MCF 10A (cell line): ENCODE measurements at regions of chr2 and their contacts with region 1.

Region 1: DNA sequence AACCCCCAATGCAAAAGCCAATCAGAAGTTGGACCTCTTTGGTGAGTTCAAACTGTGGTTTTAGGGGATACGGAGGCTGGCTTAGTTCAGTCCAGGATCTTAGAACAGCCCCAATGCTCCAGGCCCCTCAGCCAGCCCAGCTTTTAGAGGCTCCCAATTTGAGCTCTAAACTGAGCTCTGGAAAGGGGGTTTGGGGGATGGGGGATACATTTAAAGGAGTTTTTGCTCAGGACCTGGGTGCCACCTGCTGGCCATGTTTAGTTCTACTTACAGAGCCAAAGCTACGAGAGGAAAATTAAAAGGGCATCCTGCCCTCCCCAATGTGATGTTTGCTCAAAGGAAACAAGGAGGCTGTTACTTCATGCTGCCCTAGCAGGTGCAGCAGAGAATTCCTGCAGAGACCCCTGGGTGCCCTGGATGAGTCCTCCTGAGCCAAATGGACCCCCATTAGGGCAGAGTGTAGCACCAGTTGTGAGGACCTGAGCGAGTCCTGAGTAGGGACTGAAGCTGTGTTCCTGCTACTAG is 15.9 kb upstream of the TMEM214 start:
- DNase-seq: peak; percentile 68
- H3K4me3 Mint-ChIP-seq: no peak overlapping the region
- H3K27ac Mint-ChIP-seq: no peak overlapping the region
- H3K4me1 Mint-ChIP-seq: peaks cover 20% of the 10 kb centered on the region
- H3K27me3 Mint-ChIP-seq: no peaks in the 10 kb centered on the region
- CTCF ChIP-seq: peak; percentile 77

Region 2: DNA sequence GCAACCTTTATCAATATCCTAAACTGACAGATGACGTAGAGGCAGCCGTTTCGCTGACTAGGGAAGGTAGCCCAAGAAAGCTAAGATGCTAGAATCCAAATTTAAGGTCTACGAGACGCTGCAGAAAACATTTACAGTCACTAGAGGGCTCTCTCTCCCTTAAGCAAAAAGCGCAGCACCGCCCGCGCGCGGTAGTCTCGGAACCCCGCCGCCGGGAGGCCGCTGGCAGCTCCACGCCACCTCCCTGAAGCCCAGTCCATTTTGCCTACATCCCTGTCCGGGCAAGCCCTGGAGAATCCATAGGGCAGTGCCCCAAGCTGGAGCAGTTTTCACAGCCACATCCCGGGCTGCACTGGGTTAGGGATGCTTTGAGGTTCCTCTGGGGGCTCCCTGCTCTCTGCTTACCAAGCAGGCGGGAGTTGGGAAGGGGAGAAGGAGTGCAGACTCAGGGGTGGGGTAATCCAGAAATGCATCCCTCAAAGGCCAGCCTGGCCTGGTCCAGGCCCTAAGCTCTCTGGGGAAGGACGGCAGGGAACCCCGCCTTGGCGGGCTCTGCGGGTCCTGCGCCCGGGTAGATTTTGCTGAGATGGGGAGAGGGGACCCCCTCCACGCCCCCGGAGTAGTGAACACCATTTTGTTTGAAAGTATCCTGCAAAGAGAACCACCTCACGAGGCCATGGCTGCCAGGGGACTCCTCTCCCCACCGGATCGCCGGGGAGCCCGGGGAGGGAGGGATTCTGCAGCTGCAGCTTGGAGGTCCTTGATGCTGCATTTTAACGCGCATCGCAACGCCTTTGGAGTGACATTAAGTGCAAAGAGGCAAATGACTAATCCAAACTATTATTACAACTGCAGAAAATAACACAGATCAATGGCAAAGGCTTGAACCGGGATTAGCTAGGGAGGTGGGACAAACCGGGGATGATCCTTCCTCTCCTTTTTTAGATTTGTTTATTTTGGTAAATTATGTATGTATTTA is 170.2 kb before region 1 on chr2:
- CTCF ChIA-PET with region 1: interaction called, 26 read pairs
- POLR2A ChIA-PET with region 1: no interaction called
- intact Hi-C with region 1: loop called (anchors 1 kb)
- DNase-seq: peak; percentile 67
- H3K4me3 Mint-ChIP-seq: no peak overlapping the region
- H3K27ac Mint-ChIP-seq: no peak overlapping the region
- H3K4me1 Mint-ChIP-seq: no peaks in the 10 kb centered on the region
- H3K27me3 Mint-ChIP-seq: peaks cover 54% of the 10 kb centered on the region
- CTCF ChIP-seq: peak; percentile 86

Region 3: DNA sequence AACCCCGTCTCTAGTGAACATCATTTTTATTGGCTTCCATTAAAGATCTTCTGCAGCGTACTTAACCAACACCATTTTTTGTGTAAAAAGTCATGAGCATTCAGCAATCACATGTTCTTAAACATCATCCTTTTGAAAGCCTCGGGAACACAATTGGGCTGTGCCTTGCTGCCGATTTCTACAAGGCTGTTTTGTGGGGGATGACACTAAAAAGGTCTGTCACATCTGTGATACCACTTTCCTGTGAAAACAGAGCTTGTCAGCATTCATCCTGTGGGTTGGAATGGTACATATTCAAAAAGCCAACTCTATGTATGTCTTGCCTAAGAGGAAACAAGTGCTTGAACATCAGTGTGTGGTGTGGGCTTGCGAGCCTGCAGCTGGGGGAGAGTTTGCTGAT is 95.5 kb before region 1 on chr2:
- CTCF ChIA-PET with region 1: no interaction called
- POLR2A ChIA-PET with region 1: no interaction called
- intact Hi-C with region 1: no loop called
- DNase-seq: no peak
- H3K4me3 Mint-ChIP-seq: no peak overlapping the region
- H3K27ac Mint-ChIP-seq: no peak overlapping the region
- H3K4me1 Mint-ChIP-seq: peaks cover 8% of the 10 kb centered on the region
- H3K27me3 Mint-ChIP-seq: peaks cover 15% of the 10 kb centered on the region
- CTCF ChIP-seq: no peak

Region 4: DNA sequence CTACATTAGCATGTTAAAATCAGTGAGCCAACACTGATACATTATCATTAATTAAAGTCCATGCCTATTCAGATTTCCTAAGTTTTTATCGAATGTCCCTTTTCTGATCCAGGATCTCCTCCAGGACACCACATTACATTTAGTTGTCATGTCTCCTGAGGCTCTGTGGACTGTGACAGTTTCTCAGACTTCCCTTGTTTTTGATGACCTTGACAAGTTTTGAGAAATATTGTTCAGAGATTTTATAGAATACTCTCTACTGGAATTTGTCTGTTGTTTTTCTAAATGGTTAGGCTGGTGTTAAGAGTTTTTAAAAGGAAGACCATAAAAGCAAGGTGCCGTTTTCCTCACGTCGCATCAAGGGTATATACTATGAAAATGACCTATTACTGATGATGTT is 62.7 kb before region 1 on chr2:
- CTCF ChIA-PET with region 1: interaction called, 371 read pairs
- POLR2A ChIA-PET with region 1: no interaction called
- intact Hi-C with region 1: no loop called
- DNase-seq: no peak
- H3K4me3 Mint-ChIP-seq: no peak overlapping the region
- H3K27ac Mint-ChIP-seq: no peak overlapping the region
- H3K4me1 Mint-ChIP-seq: no peaks in the 10 kb centered on the region
- H3K27me3 Mint-ChIP-seq: peaks cover 85% of the 10 kb centered on the region
- CTCF ChIP-seq: no peak

Region 5: DNA sequence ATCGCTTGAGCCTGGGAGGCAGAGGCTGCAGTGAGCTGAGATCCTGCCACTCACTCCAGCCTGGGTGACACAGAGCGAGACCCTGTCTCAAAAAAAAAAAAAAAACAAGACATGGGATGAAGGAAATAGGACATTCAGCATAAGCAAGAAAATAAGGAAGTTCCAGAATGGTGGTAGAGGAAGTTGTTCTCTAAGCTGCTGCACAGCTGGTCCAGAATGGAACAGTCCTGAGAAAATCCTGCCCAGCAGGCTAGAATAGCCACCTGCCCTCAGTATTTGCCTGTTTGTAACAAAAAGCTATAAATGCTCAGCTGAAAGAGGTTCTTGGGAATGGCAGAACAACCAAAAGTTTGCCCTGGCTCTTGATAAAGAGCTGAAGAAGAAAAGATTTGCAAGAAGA is 57.5 kb before region 1 on chr2:
- CTCF ChIA-PET with region 1: interaction called, 371 read pairs
- POLR2A ChIA-PET with region 1: interaction called, 12 read pairs
- intact Hi-C with region 1: loop called (anchors 1 kb)
- DNase-seq: no peak
- H3K4me3 Mint-ChIP-seq: no peak overlapping the region
- H3K27ac Mint-ChIP-seq: no peak overlapping the region
- H3K4me1 Mint-ChIP-seq: no peaks in the 10 kb centered on the region
- H3K27me3 Mint-ChIP-seq: peaks cover 74% of the 10 kb centered on the region
- CTCF ChIP-seq: no peak

Region 6: DNA sequence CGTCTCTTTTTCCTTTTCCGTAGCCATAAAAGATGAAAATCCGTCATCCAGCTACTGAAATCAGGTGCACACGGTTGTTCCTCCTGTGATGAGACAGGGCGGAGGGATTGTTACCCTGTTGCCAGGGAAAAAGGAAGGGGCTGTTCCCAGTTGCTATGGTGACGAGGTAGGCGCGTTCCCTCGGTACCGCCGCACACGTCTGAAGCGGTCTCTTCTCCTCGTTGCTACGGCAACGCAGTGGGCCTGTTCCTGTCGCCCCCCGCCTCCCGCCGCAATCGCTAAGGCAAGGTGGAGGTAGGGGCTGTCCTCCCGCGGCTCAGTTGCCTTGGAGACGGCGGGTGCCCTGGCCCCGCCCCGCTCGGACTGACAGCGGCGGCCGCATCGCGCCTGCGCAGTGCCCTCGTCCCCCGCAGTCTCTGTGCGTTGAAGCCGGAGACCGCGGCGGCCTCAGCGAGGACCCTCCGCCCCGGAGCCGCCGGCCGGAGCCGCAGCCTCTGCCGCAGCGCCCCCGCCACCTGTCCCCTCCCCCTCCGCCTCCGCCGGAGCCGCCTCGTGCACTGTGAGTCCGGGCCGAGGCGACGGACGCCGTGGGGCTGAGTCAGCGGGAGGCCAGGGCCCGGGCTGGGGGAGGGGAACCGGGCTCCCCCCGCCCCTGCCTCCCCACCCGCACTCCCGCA is 46.5 kb before region 1 on chr2 and contains the start of gene MAPRE3:
- CTCF ChIA-PET with region 1: interaction called, 371 read pairs
- POLR2A ChIA-PET with region 1: interaction called, 7 read pairs
- intact Hi-C with region 1: no loop called
- DNase-seq: peak; percentile 64
- H3K4me3 Mint-ChIP-seq: peak within 1 kb of the TSS; percentile 88
- H3K27ac Mint-ChIP-seq: peak within 1 kb of the TSS; percentile 80
- H3K4me1 Mint-ChIP-seq: peaks cover 23% of the 10 kb centered on the region
- H3K27me3 Mint-ChIP-seq: peaks cover 22% of the 10 kb centered on the region
- CTCF ChIP-seq: no peak
- total RNA-seq, gene MAPRE3: 18.0 and 26.0 TPM in 2 replicates

Region 7: GRCh38 chr2:26982102-26982742 is 34.6 kb before region 1 on chr2:
- CTCF ChIA-PET with region 1: interaction called, 24 read pairs
- POLR2A ChIA-PET with region 1: interaction called, 3 read pairs
- intact Hi-C with region 1: no loop called
- DNase-seq: peak; percentile 76
- H3K4me3 Mint-ChIP-seq: no peak overlapping the region
- H3K27ac Mint-ChIP-seq: no peak overlapping the region
- H3K4me1 Mint-ChIP-seq: peaks cover 14% of the 10 kb centered on the region
- H3K27me3 Mint-ChIP-seq: no peaks in the 10 kb centered on the region
- CTCF ChIP-seq: peak; percentile 35

Region 8: GRCh38 chr2:26988058-26988860 is 28.6 kb before region 1 on chr2:
- CTCF ChIA-PET with region 1: interaction called, 13 read pairs
- POLR2A ChIA-PET with region 1: no interaction called
- intact Hi-C with region 1: no loop called
- DNase-seq: peak; percentile 43
- H3K4me3 Mint-ChIP-seq: no peak overlapping the region
- H3K27ac Mint-ChIP-seq: no peak overlapping the region
- H3K4me1 Mint-ChIP-seq: peaks cover 14% of the 10 kb centered on the region
- H3K27me3 Mint-ChIP-seq: no peaks in the 10 kb centered on the region
- CTCF ChIP-seq: no peak